Heart right ventricle (tissue), 16 donors: ENCODE measurements at regions of chr2 and their contacts with region 1.

Region 1: GRCh38 chr2:30436859-30437435 is 10.1 kb upstream of the LCLAT1 start:
- DNase-seq: peak in 1 of 2 donors; percentile 36
- ATAC-seq: peak in 7 of 8 donors; percentile 44 to 76 (median 68)
- H3K4me3 ChIP-seq: no peak overlapping the region
- H3K27ac ChIP-seq: peak overlapping the region; percentile 33 to 88 (median 78)
- H3K4me1 ChIP-seq: peaks cover 10 to 50% (median 32%) of the 10 kb centered on the region in 9 donors
- H3K27me3 ChIP-seq: no peaks in the 10 kb centered on the region
- CTCF ChIP-seq: no peak

Region 2: GRCh38 chr2:30362468-30363081 is 74.4 kb before region 1 on chr2:
- intact Hi-C with region 1: loop called in 2 of 10 experiments (anchors 5 kb)
- DNase-seq: no peak
- ATAC-seq: no peak
- H3K4me3 ChIP-seq: no peak overlapping the region
- H3K27ac ChIP-seq: peak overlapping the region; percentile 34 to 88 (median 78)
- H3K4me1 ChIP-seq: peaks cover 18 to 80% (median 59%) of the 10 kb centered on the region in 9 donors
- H3K27me3 ChIP-seq: no peaks in the 10 kb centered on the region
- CTCF ChIP-seq: no peak

Region 3: DNA sequence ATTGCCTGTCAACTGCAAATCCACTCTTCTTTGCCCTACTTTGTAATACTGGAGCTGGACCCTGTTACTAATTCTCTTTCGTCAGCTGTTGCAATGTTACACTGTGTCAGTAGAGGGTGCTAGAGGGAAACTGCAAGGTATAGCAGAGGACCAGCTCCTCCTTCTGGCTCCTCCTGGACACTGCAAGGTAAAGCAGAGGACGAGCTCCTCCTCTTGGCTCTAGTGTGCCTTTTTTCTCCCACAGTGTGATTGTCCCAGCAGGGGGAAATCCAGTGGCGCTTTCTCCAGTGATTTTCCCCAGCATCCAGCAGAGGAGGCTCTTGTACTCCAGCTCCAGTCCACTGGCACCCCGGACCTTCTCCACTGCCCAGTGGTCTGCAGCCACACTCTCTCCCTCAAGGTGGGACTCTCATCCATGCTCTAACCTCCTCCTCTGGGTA is 274.7 kb after region 1 on chr2:
- intact Hi-C with region 1: no loop called
- DNase-seq: peak; percentile 72 to 92
- ATAC-seq: peak; percentile 57 to 78 (median 67)
- H3K4me3 ChIP-seq: no peak overlapping the region
- H3K27ac ChIP-seq: no peak overlapping the region
- H3K4me1 ChIP-seq: peaks cover 0 to 32% (median 8%) of the 10 kb centered on the region in 9 donors
- H3K27me3 ChIP-seq: no peaks in the 10 kb centered on the region
- CTCF ChIP-seq: peak; percentile 92 to 100 (median 99)